Mammary epithelial cell (primary cell): ENCODE measurements at regions of chr1 and their contacts with region 1.

Region 1: GRCh38 chr1:224939844-224940425 is 10.5 kb downstream of the DNAH14 start:
- DNase-seq: no peak
- H3K4me3 ChIP-seq: no peak overlapping the region
- H3K27ac ChIP-seq: no peak overlapping the region
- H3K4me1 ChIP-seq: no peaks in the 10 kb centered on the region
- H3K27me3 ChIP-seq: no peaks in the 10 kb centered on the region
- CTCF ChIP-seq: no peak

Region 2: DNA sequence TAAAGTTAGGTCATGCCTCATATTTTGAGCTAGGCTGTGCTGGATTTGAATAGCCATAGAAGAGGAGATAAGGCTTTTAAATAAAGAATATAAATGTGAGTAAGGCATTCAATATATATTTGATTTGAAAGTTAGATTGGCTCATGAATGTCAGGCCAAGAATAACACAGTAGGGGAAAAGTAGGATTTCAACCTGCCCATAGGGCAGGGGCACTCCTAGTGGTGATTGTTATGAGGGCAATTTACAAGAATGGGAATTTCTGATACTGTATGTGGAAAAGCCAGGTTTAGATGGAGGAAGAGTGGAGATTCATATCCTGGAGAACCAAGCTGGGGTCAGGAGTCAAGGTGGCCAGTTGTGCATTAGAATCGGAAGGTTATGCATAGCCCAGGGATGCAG is 64.5 kb after region 1 on chr1:
- CTCF ChIA-PET with region 1: no interaction called
- dilution Hi-C with region 1: no loop called
- in situ Hi-C with region 1: no loop called
- intact Hi-C with region 1: no loop called
- DNase-seq: no peak
- H3K4me3 ChIP-seq: no peak overlapping the region
- H3K27ac ChIP-seq: no peak overlapping the region
- H3K4me1 ChIP-seq: no peaks in the 10 kb centered on the region
- H3K27me3 ChIP-seq: no peaks in the 10 kb centered on the region
- CTCF ChIP-seq: peak; percentile 34 to 35

Region 3: GRCh38 chr1:225063722-225064121 is 123.8 kb after region 1 on chr1:
- CTCF ChIA-PET with region 1: no interaction called
- dilution Hi-C with region 1: no loop called
- in situ Hi-C with region 1: loop called in 1 of 2 experiments (anchors 5 kb)
- intact Hi-C with region 1: no loop called
- DNase-seq: no peak
- H3K4me3 ChIP-seq: no peak overlapping the region
- H3K27ac ChIP-seq: no peak overlapping the region
- H3K4me1 ChIP-seq: no peaks in the 10 kb centered on the region
- H3K27me3 ChIP-seq: no peaks in the 10 kb centered on the region
- CTCF ChIP-seq: no peak

Region 4: DNA sequence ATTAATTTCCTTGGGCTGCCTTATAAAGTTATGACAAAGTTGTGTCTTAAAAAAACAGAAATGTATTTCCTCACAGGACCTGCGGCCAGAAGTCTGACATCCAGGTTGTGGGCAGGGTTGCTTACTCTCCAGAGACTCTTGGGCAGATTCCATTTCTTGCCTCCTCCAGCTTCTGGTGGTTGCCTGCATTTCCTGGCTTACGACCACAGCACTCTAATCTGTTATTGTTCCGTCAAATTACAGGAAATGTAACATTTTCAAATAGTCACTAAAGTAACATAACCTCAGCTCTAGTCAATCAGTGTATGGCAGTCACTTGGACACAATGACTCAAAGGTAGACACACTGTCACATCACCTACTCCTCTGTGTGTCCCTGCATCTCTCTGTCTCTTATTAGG is 216.3 kb after region 1 on chr1:
- CTCF ChIA-PET with region 1: no interaction called
- dilution Hi-C with region 1: no loop called
- in situ Hi-C with region 1: no loop called
- intact Hi-C with region 1: no loop called
- DNase-seq: no peak
- H3K4me3 ChIP-seq: no peak overlapping the region
- H3K27ac ChIP-seq: no peak overlapping the region
- H3K4me1 ChIP-seq: no peaks in the 10 kb centered on the region
- H3K27me3 ChIP-seq: no peaks in the 10 kb centered on the region
- CTCF ChIP-seq: no peak